Endothelial cell of umbilical vein (primary cell): ENCODE measurements at regions of chr12 and their contacts with region 1.

Region 1: GRCh38 chr12:106048676-106049075 is 90.1 kb downstream of the NUAK1 start:
- DNase-seq: no peak
- H3K4me3 ChIP-seq: no peak overlapping the region
- H3K27ac ChIP-seq: no peak overlapping the region
- H3K4me1 ChIP-seq: no peaks in the 10 kb centered on the region
- H3K27me3 ChIP-seq: no peaks in the 10 kb centered on the region
- CTCF ChIP-seq: no peak
- POLR2A ChIP-seq: no peak

Region 2: GRCh38 chr12:105814283-105814682 is 234.4 kb before region 1 on chr12:
- CTCF ChIA-PET with region 1: no interaction called
- POLR2A ChIA-PET with region 1: no interaction called
- dilution Hi-C with region 1: no loop called
- intact Hi-C with region 1: loop called (anchors 1 kb)
- DNase-seq: no peak
- H3K4me3 ChIP-seq: no peak overlapping the region
- H3K27ac ChIP-seq: no peak overlapping the region
- H3K4me1 ChIP-seq: no peaks in the 10 kb centered on the region
- H3K27me3 ChIP-seq: peaks cover 16 to 19% of the 10 kb centered on the region in 2 experiments
- CTCF ChIP-seq: no peak
- POLR2A ChIP-seq: no peak